ENCODE measurements at regions of chr3 and their contacts with region 1.

Region 1: DNA sequence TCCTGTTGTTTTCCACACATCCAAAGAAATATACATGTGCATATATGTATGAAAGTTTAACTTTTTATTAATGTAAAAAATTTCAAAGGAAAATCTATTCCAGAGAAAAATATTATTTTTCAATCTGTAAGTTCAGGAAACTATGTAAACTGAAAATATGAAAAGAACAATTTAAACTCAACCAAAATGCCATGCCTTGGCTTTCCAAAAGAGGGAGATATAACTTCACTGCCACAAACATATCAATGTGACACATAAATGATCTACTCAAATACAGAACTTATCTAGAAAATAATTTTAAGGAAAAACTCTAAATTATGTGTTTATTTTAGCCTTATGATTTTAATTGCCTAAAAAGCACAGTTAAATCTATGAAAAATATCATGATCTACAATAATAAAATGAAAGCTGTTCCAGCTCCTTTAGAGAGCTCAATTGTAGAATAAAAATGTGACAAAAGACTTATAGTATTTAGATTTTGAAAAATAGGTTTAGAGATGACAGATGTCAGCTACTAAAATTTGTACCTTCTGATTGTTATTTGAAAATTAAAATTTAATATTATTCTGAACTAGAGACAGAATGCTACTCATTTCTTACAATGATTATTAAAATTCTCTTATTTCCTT is 94.8 kb downstream of the GBE1 start:
- DNase-seq: no peak
- ATAC-seq: no peak

Region 2: DNA sequence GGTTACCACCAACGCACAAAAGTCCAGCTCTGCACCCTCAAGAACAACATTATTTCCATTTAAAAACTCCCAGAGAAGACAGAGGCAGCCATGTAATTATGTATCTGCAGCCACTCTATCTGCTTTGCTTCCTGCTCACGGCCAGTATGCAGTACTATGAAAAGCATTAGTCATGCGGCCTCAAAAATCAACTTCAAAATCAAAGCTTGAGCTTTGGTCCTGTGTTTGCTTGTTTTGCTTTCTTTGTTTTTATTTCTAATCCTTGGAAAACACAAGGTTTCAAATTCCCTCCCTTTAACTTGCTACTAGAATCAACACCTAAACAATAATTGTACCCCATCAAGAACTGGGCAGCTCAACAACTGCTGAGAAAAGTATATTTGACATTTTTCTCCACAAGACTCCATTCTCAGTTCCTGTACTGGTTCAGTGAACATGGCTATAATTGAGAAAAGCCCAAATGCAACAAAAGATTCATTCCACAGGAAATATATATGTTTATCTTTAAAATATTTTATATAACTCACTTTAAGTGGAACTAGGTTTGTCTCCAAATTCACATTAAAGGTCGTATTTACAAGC is 57.2 kb after region 1 on chr3:
- intact Hi-C with region 1: no loop called
- DNase-seq: no peak
- ATAC-seq: peak; percentile 76

Region 3: DNA sequence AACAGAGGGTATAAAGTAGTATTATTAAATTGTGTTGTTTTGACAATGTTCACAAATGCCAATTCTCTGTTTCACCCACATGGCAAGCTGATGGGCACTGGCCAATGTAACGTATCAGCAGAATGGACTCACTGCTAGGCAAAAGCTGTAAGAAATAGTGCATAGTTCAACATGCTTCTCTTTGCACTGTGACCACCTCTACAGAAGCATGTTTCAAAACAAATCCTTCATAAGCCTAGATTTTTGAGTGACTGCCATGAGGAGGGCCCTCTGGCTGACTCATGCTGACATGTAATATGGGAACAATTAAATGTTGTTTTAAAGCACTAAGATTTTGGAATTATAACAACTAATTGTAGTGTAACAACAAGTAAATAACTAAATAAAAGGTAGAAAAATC is 91.7 kb after region 1 on chr3:
- intact Hi-C with region 1: loop called (anchors 5 kb)
- DNase-seq: no peak
- ATAC-seq: no peak

Region 4: DNA sequence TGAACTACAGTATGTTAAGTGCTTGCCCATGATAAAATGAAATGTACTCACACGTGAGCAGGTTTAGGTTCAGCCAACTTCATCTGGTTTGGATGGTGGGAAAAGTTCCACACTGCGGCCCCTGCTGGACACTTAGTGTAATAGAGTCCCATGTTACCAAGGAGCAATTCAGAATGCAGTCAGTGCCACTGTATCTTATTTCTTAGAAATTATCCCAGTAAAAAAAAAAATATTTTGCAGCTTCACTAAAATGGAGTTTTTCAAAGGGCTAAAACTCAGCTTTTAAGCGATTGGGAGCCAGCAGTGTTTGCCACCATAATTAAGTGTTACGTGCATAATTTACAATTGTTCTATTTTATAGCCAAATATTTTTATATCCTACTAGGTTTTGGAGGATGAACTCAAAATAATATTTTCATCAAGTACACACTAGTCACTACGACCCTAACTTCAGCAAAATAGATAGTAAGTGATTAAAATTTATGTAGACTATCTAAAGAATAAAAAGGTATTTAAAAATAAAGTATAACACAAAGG is 466.5 kb after region 1 on chr3:
- intact Hi-C with region 1: loop called (anchors 10 kb)
- DNase-seq: peak; percentile 65
- ATAC-seq: peak; percentile 76